Motor neuron (in vitro differentiated cells): ENCODE measurements at regions of chr11 and their contacts with region 1.

Region 1: GRCh38 chr11:62123669-62124185 is at the start of gene INCENP:
- ATAC-seq: peak; percentile 95 to 100 (median 99)
- H3K4me3 ChIP-seq: peak within 1 kb of the TSS; percentile 64 to 94 (median 75)
- H3K27ac ChIP-seq: peak within 1 kb of the TSS in 1 of 2 donors; percentile 49
- H3K4me1 ChIP-seq: peaks cover 6 to 12% of the 10 kb centered on the region in 2 donors
- total RNA-seq, gene INCENP: 5.2 to 47.9 (median 7.3) TPM

Region 2: GRCh38 chr11:61792310-61793085 is 331.2 kb before region 1 on chr11 and contains the starts of genes FEN1 and TMEM258:
- in situ Hi-C with region 1: loop called in 1 of 9 experiments (anchors 25 kb)
- ATAC-seq: peak; percentile 84 to 89 (median 87)
- H3K4me3 ChIP-seq: peak within 1 kb of the TSS; percentile 72 to 94 (median 76)
- H3K27ac ChIP-seq: peak within 1 kb of the TSS; percentile 99 to 100
- H3K4me1 ChIP-seq: peaks cover 4 to 13% of the 10 kb centered on the region in 2 donors
- total RNA-seq, gene FEN1: 7.5 to 59.0 (median 16.6) TPM
- total RNA-seq, gene TMEM258: 138 to 330 (median 269) TPM

Region 3: GRCh38 chr11:61805146-61805545 is 318.6 kb before region 1 on chr11:
- in situ Hi-C with region 1: no loop called
- ATAC-seq: no peak
- H3K4me3 ChIP-seq: no peak overlapping the region
- H3K27ac ChIP-seq: no peak overlapping the region
- H3K4me1 ChIP-seq: no peaks in the 10 kb centered on the region

Region 4: DNA sequence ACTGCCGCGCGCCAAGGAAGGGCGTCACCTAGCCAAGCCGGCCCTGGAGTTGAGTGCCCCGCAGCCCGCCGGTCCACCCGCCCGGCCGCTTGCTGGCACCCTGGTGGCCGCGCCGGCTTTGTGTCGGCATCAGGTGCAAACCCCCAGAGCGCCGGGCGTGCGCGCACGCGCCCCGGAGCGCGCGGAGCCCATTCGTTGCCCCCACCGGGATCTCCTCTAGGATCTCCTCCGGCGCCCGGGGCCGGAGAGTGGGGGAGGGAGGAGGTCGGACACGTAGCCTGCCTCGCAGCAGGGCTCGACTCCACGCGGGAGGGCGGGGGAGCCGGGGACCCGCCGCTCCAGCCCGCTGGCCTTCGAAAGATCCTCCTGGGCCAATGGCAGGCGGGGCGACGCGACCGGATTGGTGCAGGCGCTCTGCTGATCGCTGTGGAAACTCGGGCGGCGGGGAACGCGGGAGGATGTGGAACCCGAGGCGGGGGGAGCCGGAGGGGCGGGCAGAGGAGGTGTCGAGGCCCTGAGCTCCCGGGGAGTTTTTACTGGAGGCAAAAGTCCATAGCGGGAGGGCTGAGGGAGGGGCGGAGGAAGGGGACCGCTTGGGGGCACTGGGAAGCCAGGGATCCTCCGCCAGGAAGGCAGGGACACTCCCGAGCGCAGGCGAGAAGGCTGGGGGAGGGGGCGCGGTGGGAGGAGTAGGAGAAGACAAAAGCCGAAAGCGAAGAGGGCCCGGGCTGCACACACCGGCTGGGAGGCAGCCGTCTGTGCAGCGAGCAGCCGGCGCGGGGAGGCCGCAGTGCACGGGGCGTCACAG is 296.0 kb before region 1 on chr11 and contains the start of gene FADS2:
- in situ Hi-C with region 1: no loop called
- ATAC-seq: peak; percentile 79 to 89 (median 85)
- H3K4me3 ChIP-seq: peak within 1 kb of the TSS; percentile 57 to 93 (median 90)
- H3K27ac ChIP-seq: peak within 1 kb of the TSS; percentile 97 to 98
- H3K4me1 ChIP-seq: peaks cover 38 to 43% of the 10 kb centered on the region in 2 donors
- total RNA-seq, gene FADS2: 80.3 to 358 (median 141) TPM

Region 5: GRCh38 chr11:62370743-62371440 is 247.2 kb after region 1 on chr11:
- in situ Hi-C with region 1: no loop called
- ATAC-seq: no peak
- H3K4me3 ChIP-seq: no peak overlapping the region
- H3K27ac ChIP-seq: no peak overlapping the region
- H3K4me1 ChIP-seq: peaks cover 2 to 4% of the 10 kb centered on the region in 2 donors

Region 6: DNA sequence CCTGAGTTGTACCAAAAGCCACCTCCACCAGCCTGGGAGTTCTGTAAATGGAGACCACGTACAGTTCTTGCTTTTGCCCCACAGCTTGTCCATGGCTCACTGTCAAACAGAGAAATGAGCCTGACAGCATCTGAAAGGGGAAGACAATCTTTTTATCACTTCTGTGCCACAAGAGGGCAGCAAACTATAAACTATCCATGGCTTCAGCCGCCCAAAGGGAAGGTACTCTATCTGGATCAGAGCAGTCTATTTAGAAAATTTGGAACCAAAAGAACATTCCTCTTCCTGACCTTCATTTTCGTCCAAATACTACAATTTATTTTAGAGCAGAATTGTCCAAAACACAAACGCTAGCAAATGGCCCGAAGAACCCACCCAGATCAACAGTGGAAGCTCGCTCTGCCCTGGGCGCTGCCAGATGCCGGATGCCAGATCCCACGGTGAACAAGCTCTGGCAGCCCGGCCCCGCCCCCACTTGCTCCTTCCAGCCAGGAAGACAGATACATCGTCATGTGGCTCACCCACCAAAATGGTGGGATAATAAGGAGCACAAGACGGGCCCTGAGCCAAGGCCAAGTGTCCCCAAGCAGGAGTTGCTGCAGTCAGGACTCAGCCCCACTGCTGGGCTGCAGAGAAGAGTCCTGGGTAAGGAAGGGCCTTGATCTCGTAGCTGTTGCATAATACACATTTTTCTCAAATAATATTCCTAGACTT is 271.3 kb after region 1 on chr11:
- in situ Hi-C with region 1: no loop called
- ATAC-seq: peak; percentile 80 to 94 (median 92)
- H3K4me3 ChIP-seq: peak overlapping the region in 4 of 5 donors; percentile 0 to 6 (median 1)
- H3K27ac ChIP-seq: peak overlapping the region in 1 of 2 donors; percentile 18
- H3K4me1 ChIP-seq: peaks cover 21 to 26% of the 10 kb centered on the region in 2 donors